Activated CD4-positive, alpha-beta T cell treated with anti-CD3 and anti-CD28 coated beads, Interleukin-2, amount 10 ng/mL, durations not matched to agents 24 days and 14 days (primary cell): ENCODE measurements at regions of chr9 and their contacts with region 1.

Region 1: GRCh38 chr9:129597355-129598088 is 23.4 kb downstream of the C9orf50 start:
- DNase-seq: peak; percentile 84
- H3K4me3 Mint-ChIP-seq: peak overlapping the region; percentile 62
- H3K27ac Mint-ChIP-seq: peak overlapping the region; percentile 58
- H3K4me1 Mint-ChIP-seq: peaks cover 31% of the 10 kb centered on the region
- H3K27me3 Mint-ChIP-seq: peaks cover 4% of the 10 kb centered on the region

Region 2: DNA sequence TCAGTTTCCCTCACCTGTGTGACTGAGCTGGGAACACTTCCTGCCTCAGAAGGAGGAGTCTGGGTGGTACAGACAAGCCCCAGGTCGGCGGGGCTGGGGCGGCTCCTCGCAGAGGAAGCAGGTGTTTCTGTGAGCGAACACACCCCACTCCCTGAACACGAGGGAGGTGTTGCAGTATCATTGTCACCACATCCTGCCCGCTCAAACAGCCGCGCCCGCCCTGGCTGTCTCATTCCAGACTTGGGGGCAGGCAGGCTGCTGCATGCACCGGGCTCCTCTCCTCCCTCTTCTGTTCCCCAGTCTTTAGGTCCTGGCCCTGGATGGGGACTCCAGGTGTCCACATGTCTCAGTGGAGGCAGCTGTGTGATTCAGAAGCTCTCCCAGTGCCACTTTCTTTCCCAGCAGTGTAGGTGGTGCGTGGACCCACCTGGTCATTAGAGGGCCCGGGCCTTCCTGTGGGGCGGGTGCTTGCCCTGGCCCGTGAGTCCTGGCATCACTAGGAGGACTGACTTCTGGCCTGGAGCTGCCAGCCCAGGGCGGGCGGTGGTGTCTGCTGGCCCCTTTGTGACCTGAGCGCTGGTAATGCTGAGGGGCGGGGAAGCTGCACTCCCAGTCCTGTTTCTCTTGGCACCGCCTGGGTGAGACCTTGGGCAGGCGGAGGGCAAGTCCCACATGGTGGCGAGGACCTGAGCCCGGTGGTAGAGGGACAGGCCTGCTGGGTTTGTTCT is 695.0 kb before region 1 on chr9:
- intact Hi-C with region 1: no loop called
- DNase-seq: peak; percentile 95
- H3K4me3 Mint-ChIP-seq: peak overlapping the region; percentile 76
- H3K27ac Mint-ChIP-seq: peak overlapping the region; percentile 89
- H3K4me1 Mint-ChIP-seq: peaks cover 57% of the 10 kb centered on the region
- H3K27me3 Mint-ChIP-seq: no peaks in the 10 kb centered on the region

Region 3: GRCh38 chr9:129584136-129584535 is 13.4 kb before region 1 on chr9:
- intact Hi-C with region 1: loop called (anchors 1 kb)
- DNase-seq: peak; percentile 92
- H3K4me3 Mint-ChIP-seq: peak overlapping the region; percentile 24
- H3K27ac Mint-ChIP-seq: peak overlapping the region; percentile 89
- H3K4me1 Mint-ChIP-seq: peaks cover 80% of the 10 kb centered on the region
- H3K27me3 Mint-ChIP-seq: peaks cover 5% of the 10 kb centered on the region

Region 4: DNA sequence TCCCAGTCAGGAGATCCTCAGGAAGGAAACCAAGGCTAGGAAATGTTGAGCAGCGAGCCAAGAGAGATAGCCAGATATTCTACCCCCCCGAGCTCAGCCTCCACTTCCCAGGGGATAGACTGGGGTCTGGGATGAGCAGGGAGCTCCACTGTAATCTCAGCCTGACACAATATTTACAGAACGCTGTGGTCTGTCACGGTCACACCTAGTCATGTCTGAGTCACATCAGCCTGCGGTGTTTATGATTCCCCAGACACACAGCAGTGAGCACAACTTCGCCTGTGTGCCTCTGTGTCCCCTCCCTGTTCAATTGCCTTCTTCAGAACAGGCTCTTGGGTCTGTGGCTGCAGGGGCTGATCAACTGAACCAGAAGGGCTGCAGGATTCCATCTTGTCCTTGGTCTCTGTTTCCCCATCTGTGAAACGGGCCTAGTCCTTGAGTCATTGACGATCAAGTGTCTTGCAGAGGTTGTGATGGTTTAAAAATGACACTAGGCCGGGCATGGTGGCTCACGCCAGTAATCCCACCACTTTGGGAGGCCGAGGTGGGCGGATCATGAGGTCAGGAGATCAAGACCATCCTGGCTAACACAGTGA is 59.4 kb after region 1 on chr9:
- intact Hi-C with region 1: no loop called
- DNase-seq: no peak
- H3K4me3 Mint-ChIP-seq: no peak overlapping the region
- H3K27ac Mint-ChIP-seq: no peak overlapping the region
- H3K4me1 Mint-ChIP-seq: no peaks in the 10 kb centered on the region
- H3K27me3 Mint-ChIP-seq: peaks cover 8% of the 10 kb centered on the region